Activated naive CD4-positive, alpha-beta T cell treated with anti-CD3 and anti-CD28 coated beads, Interleukin-2, amount 10 ng/mL, durations not matched to agents 7 days and 5 days (primary cell): ENCODE measurements at regions of chr10 and their contacts with region 1.

Region 1: GRCh38 chr10:71893920-71894319 is 42.9 kb upstream of the PSAP start:
- DNase-seq: no peak
- H3K4me3 Mint-ChIP-seq: no peak overlapping the region
- H3K27ac Mint-ChIP-seq: no peak overlapping the region
- H3K4me1 Mint-ChIP-seq: peaks cover 20% of the 10 kb centered on the region
- H3K27me3 Mint-ChIP-seq: peaks cover 48% of the 10 kb centered on the region

Region 2: GRCh38 chr10:71835671-71836595 is 58.0 kb before region 1 on chr10:
- CTCF ChIA-PET with region 1: interaction called, 23 read pairs
- DNase-seq: no peak
- H3K4me3 Mint-ChIP-seq: no peak overlapping the region
- H3K27ac Mint-ChIP-seq: no peak overlapping the region
- H3K4me1 Mint-ChIP-seq: peaks cover 37% of the 10 kb centered on the region
- H3K27me3 Mint-ChIP-seq: no peaks in the 10 kb centered on the region

Region 3: DNA sequence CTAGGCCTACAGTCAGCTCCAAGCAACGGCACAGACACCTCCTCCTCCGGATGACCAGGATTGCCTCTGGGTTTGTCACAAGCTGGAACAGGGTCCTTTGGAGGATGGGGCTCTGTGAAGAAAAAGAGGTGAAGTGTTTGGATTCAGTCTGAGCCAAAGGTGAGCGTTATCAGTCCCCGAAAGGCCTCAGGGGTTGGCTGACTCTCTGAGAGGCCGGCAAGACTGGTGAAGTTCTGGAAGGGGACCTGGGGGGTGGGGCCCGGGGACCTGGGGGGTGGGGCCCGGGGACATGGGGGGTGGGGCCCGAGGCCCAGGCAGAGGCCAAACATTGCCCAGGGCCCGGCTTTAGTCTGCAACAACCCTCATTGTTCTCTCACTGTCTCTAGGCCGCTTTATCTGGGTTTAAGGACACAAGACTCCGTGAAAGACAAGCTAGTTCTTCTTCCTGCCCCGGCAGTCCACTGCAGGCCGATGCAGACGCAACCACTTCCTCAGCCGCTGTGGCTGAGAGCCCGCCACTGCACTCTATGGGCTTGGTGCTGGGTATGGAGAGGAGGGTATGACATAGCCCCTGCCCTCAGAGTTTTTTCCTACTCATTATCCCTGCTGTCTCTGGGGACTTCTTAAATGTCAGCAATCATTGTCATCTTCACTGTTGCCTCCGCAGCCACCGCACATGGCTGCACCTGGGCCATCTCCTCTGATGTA is 15.4 kb before region 1 on chr10:
- CTCF ChIA-PET with region 1: interaction called, 12 read pairs
- DNase-seq: peak; percentile 48
- H3K4me3 Mint-ChIP-seq: no peak overlapping the region
- H3K27ac Mint-ChIP-seq: peak overlapping the region; percentile 64
- H3K4me1 Mint-ChIP-seq: peaks cover 25% of the 10 kb centered on the region
- H3K27me3 Mint-ChIP-seq: peaks cover 13% of the 10 kb centered on the region

Region 4: GRCh38 chr10:71905164-71905563 is 11.2 kb after region 1 on chr10:
- CTCF ChIA-PET with region 1: interaction called, 15 read pairs
- DNase-seq: no peak
- H3K4me3 Mint-ChIP-seq: no peak overlapping the region
- H3K27ac Mint-ChIP-seq: no peak overlapping the region
- H3K4me1 Mint-ChIP-seq: peaks cover 3% of the 10 kb centered on the region
- H3K27me3 Mint-ChIP-seq: peaks cover 13% of the 10 kb centered on the region

Region 5: DNA sequence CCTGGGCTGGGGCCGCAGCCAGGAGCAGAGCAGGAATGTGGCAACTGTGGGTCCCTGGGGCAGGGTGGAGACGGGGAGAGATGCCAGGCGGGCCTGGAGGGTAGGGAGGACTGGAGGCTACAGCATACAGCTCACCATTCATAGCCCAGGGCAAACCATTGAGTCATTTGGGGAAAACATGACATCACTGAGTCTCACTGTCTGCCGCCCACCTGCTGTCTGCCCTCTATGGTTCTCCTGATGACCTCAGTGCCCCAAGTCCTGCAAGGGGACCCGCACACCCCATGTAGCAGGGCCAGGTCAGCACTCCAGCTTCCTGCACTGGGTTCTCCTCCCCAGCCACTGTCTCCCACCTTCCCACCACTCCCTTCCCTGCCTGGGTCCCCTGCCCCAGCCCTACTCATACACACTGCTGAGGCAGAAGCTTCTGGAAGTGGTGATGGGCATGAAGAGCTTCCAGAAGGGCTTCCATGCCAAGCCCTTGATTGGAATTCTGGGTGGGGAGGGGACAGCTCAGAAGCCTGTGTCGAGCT is 80.6 kb after region 1 on chr10:
- CTCF ChIA-PET with region 1: interaction called, 15 read pairs
- DNase-seq: no peak
- H3K4me3 Mint-ChIP-seq: no peak overlapping the region
- H3K27ac Mint-ChIP-seq: no peak overlapping the region
- H3K4me1 Mint-ChIP-seq: peaks cover 3% of the 10 kb centered on the region
- H3K27me3 Mint-ChIP-seq: no peaks in the 10 kb centered on the region

Region 6: DNA sequence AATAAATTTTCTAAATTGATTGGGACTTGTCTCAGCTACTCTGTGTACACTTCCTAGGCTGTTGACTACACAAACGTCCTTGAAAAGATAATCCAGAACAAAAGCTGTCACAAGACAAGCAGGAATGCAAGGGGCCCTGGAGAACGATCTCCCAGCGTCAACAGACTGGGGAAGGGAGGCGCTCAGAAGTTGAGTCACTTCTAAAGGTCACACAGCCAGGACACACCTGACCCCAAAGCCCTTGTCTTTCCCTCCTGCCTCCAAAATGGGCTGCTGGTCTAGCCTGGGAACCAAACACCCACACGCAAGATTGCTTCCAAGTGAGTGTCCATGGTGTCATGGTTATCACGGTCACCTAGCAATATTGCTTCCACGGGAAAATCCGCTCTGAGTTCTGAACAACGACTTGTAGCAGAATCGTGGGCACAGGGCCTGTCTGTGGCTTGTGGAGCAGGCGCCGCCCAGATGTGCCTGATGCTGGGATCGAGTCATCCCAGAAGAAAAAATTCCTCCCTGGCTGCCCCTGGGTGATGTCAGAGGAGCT is 144.6 kb after region 1 on chr10:
- CTCF ChIA-PET with region 1: interaction called, 11 read pairs
- DNase-seq: no peak
- H3K4me3 Mint-ChIP-seq: no peak overlapping the region
- H3K27ac Mint-ChIP-seq: no peak overlapping the region
- H3K4me1 Mint-ChIP-seq: no peaks in the 10 kb centered on the region
- H3K27me3 Mint-ChIP-seq: peaks cover 36% of the 10 kb centered on the region

Region 7: DNA sequence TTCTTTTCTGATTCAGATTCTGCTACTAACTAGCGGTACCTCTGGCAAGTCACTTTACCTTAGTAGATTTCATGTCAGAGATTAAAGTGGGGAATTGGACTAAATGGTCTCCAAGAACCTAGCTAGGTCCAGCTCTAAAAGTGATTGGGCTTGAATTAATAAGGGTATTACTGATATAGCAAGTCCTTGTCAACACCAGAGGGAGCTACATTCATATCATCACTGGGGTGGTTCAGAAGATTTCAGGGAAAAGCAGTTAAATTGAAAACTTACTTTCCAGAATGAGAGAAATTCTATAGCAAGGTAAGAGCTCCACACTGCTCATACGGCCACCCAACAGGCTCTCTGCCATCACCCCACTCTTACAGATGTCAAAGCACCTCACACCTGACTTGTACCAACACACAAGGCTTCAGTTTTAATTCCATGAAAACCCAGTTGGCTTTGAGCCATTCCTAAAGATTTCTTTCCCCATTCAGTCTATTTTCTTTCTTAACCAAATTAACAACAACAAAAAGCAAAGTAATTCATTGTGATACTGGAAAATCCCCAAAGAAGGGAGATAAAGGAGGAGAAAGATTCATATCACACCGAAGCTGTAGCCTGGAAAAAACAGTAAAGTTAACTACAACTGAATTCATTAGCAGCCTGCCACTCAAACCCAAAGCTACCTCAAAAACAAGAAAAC is 232.4 kb after region 1 on chr10:
- CTCF ChIA-PET with region 1: no interaction called
- DNase-seq: no peak
- H3K4me3 Mint-ChIP-seq: no peak overlapping the region
- H3K27ac Mint-ChIP-seq: no peak overlapping the region
- H3K4me1 Mint-ChIP-seq: peaks cover 34% of the 10 kb centered on the region
- H3K27me3 Mint-ChIP-seq: no peaks in the 10 kb centered on the region